HEK293 (cell line): ENCODE measurements at regions of chr5 and their contacts with region 1.

Region 1: DNA sequence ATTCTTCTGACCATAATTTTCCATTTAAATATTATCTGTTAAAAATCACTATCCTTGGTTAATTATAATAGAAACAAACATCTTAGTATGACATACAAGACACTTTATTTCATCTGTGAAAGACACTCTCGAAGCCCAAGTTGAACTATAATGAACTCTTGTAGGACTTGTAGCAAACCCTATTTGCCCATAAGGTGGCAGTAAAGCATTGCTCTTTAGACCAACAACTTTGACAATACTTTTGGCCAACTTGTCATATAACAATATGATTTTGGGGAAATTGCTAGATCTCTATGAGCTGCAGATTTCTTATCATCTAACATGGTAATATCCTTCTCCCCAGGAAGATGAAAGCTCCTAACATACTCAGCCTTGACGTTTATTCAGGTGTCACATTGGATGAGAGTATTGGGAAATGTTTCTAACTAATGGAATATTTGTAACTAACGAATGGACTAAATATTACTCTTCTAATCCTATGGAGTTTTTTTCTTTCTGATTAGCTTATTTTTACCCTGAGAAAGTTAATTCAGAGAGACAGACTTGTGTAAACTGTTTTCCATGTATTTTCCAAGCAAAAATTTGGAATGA is 11.0 kb downstream of the SPINK14 start:
- H3K4me3 ChIP-seq: no peak overlapping the region
- H3K27ac ChIP-seq: no peak overlapping the region
- H3K4me1 ChIP-seq: no peaks in the 10 kb centered on the region
- CTCF ChIP-seq: peak; percentile 11; the same call in 1 of the 2 replicates

Region 2: DNA sequence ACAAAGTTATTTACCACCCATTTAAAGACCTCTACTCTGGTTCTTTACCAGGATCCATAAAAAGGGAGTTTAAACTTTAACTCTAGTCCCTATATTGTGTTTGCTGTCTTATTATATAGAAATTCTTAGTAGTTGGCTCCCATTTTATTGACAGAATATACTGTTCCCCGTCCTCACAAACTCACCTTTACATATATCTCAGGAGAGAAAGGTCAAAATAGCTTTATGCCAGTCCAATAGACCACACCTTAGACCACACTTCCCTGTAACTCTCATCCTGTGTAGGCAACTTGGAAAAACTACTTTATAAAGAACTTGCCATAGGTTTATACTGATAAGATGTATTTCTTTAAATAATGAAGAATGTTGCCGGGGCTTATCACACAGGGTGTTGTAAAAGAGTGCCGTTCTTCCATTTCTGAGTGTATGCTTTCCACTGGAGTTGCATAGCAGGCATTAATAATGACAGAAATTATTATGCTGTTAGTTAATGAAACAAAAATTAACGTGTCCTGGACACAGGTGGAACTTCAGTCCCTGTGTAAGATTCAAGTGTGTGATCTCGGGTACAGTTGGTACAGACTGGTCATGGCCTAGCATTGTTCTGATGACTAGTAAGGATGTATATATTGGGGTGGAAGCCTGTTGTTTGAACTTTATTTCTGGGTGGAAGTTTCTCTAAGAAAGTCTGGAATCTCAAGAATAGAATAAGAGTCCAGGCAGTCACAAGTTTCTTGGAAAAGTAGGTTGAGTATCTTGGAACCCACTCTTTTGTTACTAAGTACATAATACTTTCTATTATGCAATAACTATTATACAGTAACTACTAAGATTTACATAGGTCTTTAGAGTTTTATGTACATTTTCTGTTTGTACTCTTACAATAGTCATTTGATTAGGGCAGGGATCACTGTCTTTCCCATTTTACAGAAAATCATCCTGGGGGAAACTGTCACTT is 44.0 kb before region 1 on chr5:
- CTCF ChIA-PET with region 1: no interaction called
- POLR2A ChIA-PET with region 1: no interaction called
- H3K4me3 ChIP-seq: no peak overlapping the region
- H3K27ac ChIP-seq: no peak overlapping the region
- H3K4me1 ChIP-seq: no peaks in the 10 kb centered on the region
- CTCF ChIP-seq: no peak

Region 3: GRCh38 chr5:148166550-148167283 is 12.6 kb before region 1 on chr5:
- CTCF ChIA-PET with region 1: interaction called, 12 read pairs
- POLR2A ChIA-PET with region 1: no interaction called
- H3K4me3 ChIP-seq: no peak overlapping the region
- H3K27ac ChIP-seq: no peak overlapping the region
- H3K4me1 ChIP-seq: no peaks in the 10 kb centered on the region
- CTCF ChIP-seq: no peak

Region 4: GRCh38 chr5:148290271-148291195 is 111.2 kb after region 1 on chr5:
- CTCF ChIA-PET with region 1: interaction called, 11 read pairs
- POLR2A ChIA-PET with region 1: no interaction called
- H3K4me3 ChIP-seq: no peak overlapping the region
- H3K27ac ChIP-seq: no peak overlapping the region
- H3K4me1 ChIP-seq: no peaks in the 10 kb centered on the region
- CTCF ChIP-seq: no peak